AG04449 (cell line): ENCODE measurements at regions of chr14 and their contacts with region 1.

Region 1: DNA sequence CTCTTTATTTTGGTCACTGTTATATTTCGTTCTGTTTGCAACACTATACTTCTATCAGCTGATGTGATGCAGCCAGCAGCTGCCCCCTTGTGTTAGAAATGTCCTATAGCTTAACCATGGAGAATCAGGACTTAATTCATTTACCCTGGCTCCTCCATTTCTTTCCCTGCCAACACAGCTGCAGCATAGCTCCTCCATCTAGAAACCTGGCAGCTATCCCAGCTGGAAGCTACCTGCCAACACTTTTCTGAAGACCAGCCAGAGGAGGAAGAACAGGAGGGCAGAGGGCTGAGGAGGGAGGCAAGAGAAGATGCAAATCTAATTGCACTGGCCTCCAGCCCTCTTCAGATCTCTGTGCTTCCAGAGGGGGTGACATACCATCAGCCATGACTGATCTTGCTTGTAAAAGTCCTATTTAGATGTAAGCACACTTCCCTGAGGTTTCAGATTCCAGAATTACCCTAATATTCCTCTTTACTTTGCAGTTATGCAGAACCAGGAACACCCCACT is 156.8 kb upstream of the TMEM260 start:
- DNase-seq: peak; percentile 31
- H3K4me3 ChIP-seq: no peak overlapping the region
- CTCF ChIP-seq: peak; percentile 69

Region 2: DNA sequence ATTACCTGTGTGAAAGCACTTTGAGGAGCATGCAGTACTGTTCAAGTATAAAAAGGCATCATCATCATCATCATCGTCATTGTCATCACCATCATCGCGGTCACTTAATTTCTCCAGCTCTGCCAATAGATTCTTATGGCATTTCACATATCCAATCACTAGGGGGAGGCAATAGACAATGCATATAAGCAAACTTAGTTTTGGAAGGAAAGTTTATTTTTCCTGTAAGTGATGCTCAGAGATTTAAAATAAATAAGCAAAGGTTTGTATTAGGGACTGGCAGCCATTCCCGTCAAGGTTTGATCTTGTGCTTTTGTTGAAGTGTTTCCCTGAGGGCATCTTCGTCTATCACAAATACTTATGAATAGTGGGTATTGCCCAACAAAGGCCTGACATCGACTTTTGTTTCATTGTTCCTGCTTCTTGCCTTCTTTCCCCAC is 715.4 kb before region 1 on chr14:
- CTCF ChIA-PET with region 1: interaction called, 13 read pairs
- POLR2A ChIA-PET with region 1: interaction called, 3 read pairs
- DNase-seq: peak; percentile 23
- H3K4me3 ChIP-seq: no peak overlapping the region
- CTCF ChIP-seq: peak; percentile 54

Region 3: DNA sequence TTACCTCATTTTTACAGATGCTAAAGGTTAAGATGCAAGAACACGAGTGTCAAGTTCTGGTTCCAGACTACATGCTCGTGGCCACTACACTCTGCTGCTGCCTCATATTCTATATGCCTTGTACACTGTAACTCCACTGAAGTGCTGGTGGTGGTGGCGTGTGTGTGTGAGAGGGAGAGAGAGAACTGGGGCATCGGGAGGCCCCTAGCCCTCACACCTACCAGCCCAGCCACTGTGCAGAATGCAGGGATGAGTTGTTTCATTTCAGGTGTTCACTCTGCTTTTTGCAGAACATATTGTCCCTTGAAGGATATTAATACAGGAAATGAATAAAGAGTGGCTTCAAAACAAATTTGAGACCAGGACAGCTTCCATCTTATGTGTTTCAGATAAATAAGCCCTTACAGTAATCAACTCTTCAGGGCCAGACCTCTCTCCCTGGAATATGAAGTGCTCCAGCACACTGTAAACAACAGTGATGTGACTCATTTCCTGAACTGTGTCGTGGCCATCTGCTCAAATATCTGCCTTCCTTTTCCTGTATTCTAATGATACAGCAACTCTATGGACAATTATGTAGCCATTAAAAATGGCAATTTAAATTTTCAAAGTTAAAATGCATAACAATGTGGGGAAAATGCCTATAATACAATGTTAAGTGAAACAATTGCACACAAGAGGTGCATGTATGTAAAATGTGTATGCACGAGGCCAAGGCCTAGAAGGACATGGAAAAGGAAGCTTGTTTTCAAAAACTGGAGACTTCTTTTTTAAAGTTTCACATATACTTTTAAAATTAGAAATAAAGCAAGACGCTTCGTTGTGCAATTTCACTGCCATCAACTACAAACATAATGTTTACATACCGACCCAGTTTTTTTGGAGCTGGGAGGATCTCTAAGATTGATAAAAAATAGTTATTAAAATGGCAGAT is 89.1 kb before region 1 on chr14:
- CTCF ChIA-PET with region 1: no interaction called
- POLR2A ChIA-PET with region 1: no interaction called
- DNase-seq: no peak
- H3K4me3 ChIP-seq: no peak overlapping the region
- CTCF ChIP-seq: no peak